ENCODE measurements at regions of chr3 and their contacts with region 1.

Region 1: DNA sequence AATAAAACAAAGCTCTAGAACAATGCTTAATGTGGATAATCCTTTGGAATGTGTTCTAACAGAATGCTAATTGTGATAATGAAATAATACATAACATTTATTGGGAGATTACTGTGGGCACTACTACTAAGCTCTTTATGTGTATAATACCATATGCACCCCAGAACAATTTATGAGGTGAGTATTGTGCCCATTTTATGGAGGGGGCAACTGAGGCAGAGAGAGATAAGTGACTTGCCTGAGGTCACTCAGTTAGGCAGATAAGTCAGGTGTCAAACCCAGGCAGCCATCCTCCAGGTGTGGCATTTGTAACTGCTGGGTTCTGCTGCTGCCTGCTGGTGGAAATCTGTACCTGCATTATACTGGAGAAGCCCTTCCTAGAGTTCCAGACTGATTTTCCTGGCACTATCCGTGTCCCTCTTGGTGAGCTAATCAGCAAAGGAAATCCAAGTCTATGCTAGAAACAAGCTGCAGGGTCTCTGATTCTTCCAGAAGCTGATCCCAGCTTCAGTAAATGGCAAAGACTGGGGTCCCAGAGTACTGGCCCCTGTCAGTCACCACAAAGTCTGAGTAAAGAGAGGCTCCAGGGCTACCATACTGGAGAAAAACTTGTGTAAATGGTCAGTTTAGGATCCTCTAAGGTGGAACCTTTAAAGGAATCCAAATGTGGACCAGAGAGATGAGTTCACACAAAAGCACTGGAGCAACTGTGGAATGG is 22.6 kb upstream of the RBP1 start:
- DNase-seq: peak; percentile 71
- H3K4me3 Mint-ChIP-seq: no peak overlapping the region
- H3K27ac Mint-ChIP-seq: no peak overlapping the region
- H3K4me1 Mint-ChIP-seq: peaks cover 36% of the 10 kb centered on the region
- H3K27me3 Mint-ChIP-seq: no peaks in the 10 kb centered on the region
- CTCF ChIP-seq: peak; percentile 81

Region 2: DNA sequence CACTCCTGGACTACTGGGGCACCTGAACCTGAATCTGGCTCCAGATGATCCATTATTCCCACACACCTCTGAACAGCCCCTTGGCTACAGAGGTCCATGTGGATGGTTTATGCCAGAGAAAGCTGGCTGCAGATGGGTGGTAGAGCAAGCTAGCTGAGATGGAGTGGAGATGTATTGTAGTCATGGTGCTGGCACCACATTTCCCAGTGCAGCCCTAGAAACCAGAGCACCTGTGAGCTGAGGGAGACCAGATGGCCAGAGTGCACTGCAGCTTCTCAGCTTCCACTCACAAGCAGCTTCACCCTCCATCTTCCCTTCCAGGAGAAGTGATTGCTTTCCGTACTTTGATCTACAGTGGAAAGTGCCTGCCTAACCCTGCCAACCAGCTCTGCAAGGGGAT is 52.5 kb before region 1 on chr3:
- CTCF ChIA-PET with region 1: no interaction called
- intact Hi-C with region 1: no loop called
- DNase-seq: no peak
- H3K4me3 Mint-ChIP-seq: no peak overlapping the region
- H3K27ac Mint-ChIP-seq: no peak overlapping the region
- H3K4me1 Mint-ChIP-seq: peaks cover 21% of the 10 kb centered on the region
- H3K27me3 Mint-ChIP-seq: no peaks in the 10 kb centered on the region
- CTCF ChIP-seq: no peak

Region 3: DNA sequence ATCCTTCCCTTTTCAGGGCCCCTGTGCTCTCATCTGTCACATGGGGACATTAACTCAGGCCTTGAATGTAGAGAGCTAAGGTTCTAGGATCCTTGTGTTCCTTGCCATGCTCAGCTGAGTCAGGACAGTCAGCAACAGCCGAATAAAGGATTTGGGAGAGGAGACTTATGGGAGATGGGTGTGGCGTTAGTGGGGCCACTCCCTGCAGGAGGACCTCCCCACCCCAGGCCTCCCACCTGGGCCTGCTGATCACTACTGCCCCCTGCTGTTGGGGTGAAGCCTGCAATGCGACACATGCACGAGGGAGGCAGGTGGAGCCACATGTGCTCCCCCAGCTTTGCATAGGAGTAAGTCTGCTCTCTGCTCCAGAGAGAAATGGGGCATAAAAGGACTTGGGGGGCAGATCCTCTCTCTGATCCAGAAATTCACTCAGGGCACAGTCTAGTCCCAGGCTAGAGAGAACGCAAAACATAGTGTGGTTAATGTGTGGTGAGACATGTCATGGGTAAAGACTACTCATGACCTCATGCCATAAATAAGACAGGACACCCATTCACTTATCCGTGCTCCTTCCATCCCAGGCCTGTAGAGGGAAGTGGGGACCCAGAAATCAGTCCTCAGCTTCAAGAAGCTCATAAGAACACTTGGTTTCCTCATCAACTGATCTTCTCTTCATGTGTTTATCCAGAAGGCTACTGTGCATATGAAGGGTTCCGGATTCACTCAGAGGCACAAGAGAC is 42.0 kb before region 1 on chr3:
- CTCF ChIA-PET with region 1: no interaction called
- intact Hi-C with region 1: loop called (anchors 1 kb)
- DNase-seq: peak; percentile 88
- H3K4me3 Mint-ChIP-seq: no peak overlapping the region
- H3K27ac Mint-ChIP-seq: no peak overlapping the region
- H3K4me1 Mint-ChIP-seq: peaks cover 7% of the 10 kb centered on the region
- H3K27me3 Mint-ChIP-seq: no peaks in the 10 kb centered on the region
- CTCF ChIP-seq: peak; percentile 81